Breast epithelium (tissue), 4 donors: ENCODE measurements at regions of chr2 and their contacts with region 1.

Region 1: DNA sequence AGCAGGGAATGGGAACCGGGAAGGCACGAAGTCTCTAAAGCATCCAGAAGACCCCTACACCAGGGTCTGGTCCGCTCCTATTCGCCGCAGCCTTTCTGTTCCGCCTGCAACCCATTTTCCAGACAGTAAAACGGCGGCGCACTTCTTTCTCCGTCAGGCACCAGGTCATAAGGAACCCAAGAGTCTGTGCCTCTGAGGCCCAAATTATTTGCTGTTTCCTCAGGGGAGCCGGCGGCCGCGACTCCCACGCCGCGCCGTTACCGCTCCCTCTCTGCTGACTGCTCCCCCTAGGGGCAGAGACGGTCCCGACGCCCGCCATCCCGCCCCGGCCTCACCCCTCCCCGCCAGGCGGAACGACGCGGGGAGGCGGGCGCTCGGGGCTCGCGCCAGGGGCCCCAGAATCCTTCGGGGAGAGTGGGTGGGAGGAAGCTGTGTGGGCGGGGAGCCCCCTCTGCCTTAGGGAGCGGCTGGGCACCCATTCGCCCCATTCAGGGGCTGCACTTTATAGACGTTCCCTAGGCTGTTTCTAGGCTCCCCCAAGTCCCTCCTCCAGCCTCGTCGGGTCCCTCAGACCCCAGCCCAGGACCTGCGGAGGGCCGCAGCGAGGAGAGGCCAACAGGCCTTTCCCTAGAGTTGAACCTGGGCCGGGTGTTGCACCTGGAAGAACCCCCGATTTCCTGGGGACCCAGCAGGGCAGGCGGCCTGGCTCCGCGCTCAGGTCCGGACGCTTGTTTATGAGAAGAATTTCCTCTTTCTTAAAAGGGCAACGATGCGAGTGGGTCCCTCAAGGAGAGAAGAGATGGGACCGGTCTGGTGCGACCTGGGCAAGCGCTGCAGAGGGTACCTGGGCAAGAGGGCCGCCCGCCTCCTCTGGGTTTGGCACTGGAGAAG is 3.6 kb upstream of the CTDSP1 start:
- DNase-seq: peak; percentile 90 to 94
- H3K4me3 ChIP-seq: peak overlapping the region; percentile 97 to 100 (median 98)
- H3K27ac ChIP-seq: peak overlapping the region; percentile 97 to 99
- H3K4me1 ChIP-seq: peaks cover 1 to 3% of the 10 kb centered on the region in 2 donors
- H3K27me3 ChIP-seq: no peaks in the 10 kb centered on the region
- CTCF ChIP-seq: peak; percentile 89 to 96 (median 93)
- POLR2A ChIP-seq: peak; percentile 20

Region 2: DNA sequence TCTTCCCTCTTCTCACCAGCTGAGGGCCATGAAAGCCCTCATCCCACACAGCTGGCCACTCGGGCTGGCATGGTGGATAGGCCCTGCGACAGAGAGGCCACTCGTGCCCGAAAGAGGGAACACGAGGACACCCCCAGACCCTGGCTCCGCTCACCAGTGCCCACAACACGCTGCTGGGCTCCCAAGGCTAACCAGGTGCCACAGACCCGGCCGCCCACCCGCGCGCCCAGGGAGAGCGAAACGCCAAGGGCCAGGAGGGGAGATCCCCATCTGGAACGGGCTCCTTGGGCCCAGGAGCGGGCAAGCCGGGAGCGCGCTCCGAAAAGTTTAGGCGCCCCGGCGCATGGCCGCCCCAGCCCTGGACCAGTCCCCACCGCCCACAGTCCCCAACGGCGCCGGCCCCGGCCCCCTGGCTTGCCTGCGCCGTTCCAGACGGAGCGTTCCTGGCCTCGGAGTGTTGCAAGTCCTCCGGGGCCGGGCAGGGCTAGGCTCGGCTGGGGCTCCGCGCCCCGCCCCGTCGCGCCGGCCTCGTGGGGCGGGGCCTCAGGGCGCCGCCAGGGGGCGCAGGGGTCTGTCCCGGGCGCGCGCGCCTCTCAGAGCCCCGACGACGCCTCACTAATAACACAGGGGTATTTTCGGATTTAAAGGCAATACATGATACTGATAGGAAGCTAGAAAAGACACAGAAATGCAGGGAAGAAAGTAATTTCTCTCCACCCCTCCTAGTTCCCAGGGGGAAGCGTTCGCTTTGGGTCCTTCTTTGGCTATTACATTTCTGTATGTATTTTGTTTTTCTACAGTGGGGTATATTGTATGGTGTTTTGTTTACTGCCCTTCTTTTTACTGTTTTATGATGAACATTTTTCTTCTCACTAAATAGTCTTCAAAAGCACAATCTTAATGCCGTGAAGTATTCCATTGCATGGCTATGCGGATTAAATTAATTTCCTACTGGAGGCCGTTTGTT is 103.7 kb before region 1 on chr2 and contains the start of gene TMBIM1:
- intact Hi-C with region 1: loop called (anchors 2 kb)
- DNase-seq: peak; percentile 70 to 73
- H3K4me3 ChIP-seq: peak within 1 kb of the TSS; percentile 72 to 94 (median 82)
- H3K27ac ChIP-seq: peak within 1 kb of the TSS; percentile 97 to 99
- H3K4me1 ChIP-seq: peaks cover 0 to 28% of the 10 kb centered on the region in 2 donors
- H3K27me3 ChIP-seq: no peaks in the 10 kb centered on the region
- CTCF ChIP-seq: peak in 1 of 3 donors; percentile 91
- POLR2A ChIP-seq: peak; percentile 24
- total RNA-seq, gene TMBIM1: 168 to 330 (median 170) TPM

Region 3: DNA sequence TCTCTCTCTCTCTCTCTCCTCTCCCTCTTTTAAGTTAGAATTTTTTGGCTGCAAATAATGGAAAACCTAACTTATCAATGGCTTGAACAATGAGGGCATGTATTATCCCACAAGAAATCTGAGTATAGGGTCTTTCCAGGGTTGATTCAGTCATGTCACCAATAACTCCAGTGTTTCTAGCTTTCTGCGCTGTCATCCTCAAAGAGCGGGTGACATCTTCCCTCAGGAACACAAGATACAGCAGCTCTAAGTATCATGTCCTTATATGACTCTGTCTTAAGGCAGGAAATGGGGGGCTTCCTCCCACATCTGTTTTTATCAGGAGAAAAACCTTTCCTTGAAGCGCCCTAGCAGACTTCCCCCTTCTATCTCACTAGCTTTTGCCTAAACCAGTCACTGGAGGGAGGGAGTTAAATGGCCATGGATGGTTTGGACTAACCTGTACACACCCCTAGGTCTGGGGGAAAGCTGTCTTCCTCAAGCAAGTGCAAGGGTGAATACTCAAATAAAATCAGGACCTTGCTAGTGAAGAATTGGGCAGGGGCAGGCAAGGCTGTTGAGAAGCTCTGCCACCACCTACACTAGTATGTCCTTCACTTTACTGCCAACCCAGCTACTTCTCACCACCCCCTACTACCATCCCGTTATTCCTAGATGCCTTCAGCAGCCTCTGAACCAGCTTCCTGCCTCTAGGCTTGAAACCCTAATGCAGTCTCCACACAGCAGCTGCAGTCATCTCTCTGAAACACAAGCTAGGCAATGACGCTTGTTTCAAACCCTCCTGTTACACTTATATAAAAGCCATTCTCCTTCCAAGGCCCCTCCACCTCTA is 865.2 kb after region 1 on chr2:
- intact Hi-C with region 1: loop called (anchors 5 kb)
- DNase-seq: no peak
- H3K4me3 ChIP-seq: no peak overlapping the region
- H3K27ac ChIP-seq: no peak overlapping the region
- H3K4me1 ChIP-seq: no peaks in the 10 kb centered on the region
- H3K27me3 ChIP-seq: no peaks in the 10 kb centered on the region
- CTCF ChIP-seq: no peak
- POLR2A ChIP-seq: no peak

Region 4: DNA sequence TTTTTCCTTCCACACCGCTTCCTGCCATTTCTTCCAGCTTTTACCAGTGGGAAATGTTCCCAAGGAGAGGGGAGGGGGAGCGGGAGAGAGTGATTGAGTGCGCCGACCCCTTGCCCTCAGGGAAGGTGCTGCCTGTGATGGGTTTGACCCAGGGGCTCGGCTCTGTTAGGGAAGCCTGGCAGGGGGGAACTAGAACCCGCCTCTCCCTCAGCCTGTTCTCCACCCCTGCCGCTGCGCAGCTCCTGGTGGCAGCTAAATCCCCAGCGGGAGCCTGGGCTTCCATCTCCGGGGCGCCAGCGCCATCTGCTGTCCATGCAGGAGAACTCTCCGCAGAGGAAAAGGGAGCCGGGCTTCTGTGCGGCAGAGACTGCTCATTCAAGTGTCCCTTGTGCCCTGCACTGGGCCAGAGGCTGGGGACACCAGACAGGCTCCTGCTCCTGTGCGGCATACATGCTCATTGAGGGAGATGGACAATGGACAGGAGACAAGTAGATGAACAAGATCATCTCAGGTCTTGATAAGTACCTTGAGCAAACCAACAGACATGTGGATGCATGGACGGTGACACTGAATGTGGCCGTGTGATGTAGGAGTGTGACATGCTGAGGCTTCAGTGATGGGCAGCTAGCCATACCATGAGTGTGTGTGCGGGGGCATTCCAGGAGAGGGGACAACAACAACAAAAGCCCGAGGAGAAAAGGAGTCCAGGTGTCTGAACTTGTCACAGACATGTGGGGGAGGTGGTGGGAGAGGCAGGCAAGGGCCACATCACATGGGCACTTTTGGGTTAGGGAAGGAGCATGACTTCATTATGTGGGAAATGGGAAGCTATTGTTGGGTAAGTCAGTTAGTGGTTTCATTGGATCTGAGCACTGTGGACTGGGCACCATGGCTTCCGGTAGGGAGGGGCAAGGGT is 1134.3 kb after region 1 on chr2:
- intact Hi-C with region 1: no loop called
- DNase-seq: peak; percentile 62 to 86
- H3K4me3 ChIP-seq: peak overlapping the region in 2 of 3 donors; percentile 15 to 46
- H3K27ac ChIP-seq: no peak overlapping the region
- H3K4me1 ChIP-seq: no peaks in the 10 kb centered on the region
- H3K27me3 ChIP-seq: peaks cover 0 to 38% of the 10 kb centered on the region in 2 donors
- CTCF ChIP-seq: peak; percentile 84 to 99 (median 98)
- POLR2A ChIP-seq: no peak

Region 5: GRCh38 chr2:219912491-219912921 is 1516.5 kb after region 1 on chr2:
- intact Hi-C with region 1: no loop called
- DNase-seq: peak in 1 of 2 donors; percentile 67
- H3K4me3 ChIP-seq: peak overlapping the region in 1 of 3 donors; percentile 37
- H3K27ac ChIP-seq: peak overlapping the region; percentile 63 to 69
- H3K4me1 ChIP-seq: no peaks in the 10 kb centered on the region
- H3K27me3 ChIP-seq: no peaks in the 10 kb centered on the region
- CTCF ChIP-seq: peak in 2 of 3 donors; percentile 19 to 52
- POLR2A ChIP-seq: no peak

Region 6: GRCh38 chr2:219983836-219984235 is 1587.8 kb after region 1 on chr2:
- intact Hi-C with region 1: no loop called
- DNase-seq: no peak
- H3K4me3 ChIP-seq: no peak overlapping the region
- H3K27ac ChIP-seq: no peak overlapping the region
- H3K4me1 ChIP-seq: no peaks in the 10 kb centered on the region
- H3K27me3 ChIP-seq: no peaks in the 10 kb centered on the region
- CTCF ChIP-seq: no peak
- POLR2A ChIP-seq: no peak